Activated CD4-positive, alpha-beta memory T cell treated with anti-CD3 and anti-CD28 coated beads for 36 hours (primary cell): ENCODE measurements at regions of chr21 and their contacts with region 1.

Region 1: DNA sequence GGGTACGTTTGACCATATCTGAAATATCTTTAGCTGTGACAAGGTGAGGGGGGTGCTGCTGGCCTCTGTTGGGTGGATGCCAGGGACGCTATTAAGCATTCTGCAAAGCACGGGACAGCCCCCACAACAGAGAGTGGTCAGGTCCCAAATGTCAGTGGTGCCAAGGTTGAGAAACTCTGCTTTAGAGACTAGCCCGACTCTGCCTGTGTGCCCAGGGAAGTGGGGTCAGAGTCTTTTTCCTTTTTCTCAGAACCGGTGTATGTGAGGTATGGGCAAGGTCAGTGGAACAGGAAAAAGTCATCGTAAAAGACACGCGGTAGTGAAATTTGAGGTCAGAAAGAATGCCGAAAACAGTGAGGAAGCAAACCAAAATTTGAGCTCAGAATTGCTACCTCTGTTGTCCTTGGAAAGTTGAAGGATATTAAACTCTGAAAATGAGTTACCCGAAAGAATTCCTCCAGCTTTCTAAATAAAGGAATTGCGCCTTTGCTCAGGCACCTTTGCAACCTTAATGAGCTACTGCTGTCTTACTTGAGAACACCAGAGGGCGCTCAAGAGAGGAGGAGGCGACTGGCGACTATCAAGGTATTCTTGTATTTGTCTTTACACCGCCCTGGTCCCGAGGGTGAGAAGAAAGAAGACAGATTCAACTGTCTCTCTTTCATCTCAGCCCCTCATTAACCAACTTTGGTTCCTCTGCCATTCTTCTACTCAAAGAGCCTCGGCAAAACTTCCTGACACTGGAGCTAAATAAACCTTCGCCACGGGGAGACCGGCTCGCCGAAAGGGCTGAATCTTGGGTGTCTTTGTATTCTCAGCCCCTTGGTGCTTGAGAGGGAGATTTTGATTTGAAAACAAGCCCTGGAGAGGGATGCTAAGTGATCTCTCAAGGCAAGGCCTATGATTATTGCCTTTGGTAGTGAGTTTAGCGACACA is 85.4 kb upstream of the OLIG2 start:
- DNase-seq: peak; percentile 44
- H3K4me3 Mint-ChIP-seq: no peak overlapping the region
- H3K27ac Mint-ChIP-seq: no peak overlapping the region
- H3K4me1 Mint-ChIP-seq: no peaks in the 10 kb centered on the region
- H3K27me3 Mint-ChIP-seq: peaks cover 3% of the 10 kb centered on the region

Region 2: DNA sequence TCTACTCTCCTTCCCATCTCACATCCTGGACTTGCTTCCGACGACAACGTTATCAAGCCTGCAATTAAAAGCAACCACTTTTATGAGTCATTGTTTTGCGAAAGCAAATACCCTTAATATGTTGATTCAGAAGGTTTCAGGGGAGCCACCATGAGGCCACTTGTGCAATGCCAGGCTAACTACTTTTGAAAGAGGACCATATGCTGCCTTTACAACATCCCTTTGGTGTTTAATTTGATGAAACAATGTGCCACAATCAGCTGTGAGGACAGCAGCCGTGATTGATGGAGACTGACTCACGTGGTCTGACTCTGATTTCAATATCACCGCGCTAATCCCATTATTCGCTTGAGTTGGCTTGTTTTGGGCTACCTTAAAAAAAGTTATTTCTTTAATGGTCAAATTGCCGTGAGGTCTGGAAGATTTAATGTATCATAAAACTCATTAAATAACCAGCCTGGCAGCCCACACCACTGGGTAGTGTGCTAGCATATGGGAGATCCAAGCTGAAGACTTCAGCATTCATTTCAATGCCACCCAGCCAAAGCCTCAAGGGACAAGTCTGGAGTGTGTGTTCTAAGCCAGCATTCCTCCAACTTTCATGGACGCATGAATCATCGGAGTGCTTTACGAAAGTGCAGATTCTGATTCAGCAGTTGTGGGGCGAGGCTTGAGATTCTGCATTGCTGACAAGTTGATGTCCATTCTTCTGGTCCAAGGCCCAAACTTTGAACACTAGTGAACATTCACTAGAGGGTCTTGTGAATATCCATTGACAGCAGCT is 95.5 kb before region 1 on chr21:
- CTCF ChIA-PET with region 1: interaction called, 11 read pairs
- POLR2A ChIA-PET with region 1: no interaction called
- intact Hi-C with region 1: no loop called
- DNase-seq: no peak
- H3K4me3 Mint-ChIP-seq: no peak overlapping the region
- H3K27ac Mint-ChIP-seq: no peak overlapping the region
- H3K4me1 Mint-ChIP-seq: no peaks in the 10 kb centered on the region
- H3K27me3 Mint-ChIP-seq: peaks cover 5% of the 10 kb centered on the region

Region 3: GRCh38 chr21:32916522-32917099 is 23.7 kb before region 1 on chr21:
- CTCF ChIA-PET with region 1: interaction called, 33 read pairs
- POLR2A ChIA-PET with region 1: no interaction called
- intact Hi-C with region 1: no loop called
- DNase-seq: peak; percentile 14
- H3K4me3 Mint-ChIP-seq: no peak overlapping the region
- H3K27ac Mint-ChIP-seq: no peak overlapping the region
- H3K4me1 Mint-ChIP-seq: peaks cover 26% of the 10 kb centered on the region
- H3K27me3 Mint-ChIP-seq: peaks cover under 1% of the 10 kb centered on the region

Region 4: DNA sequence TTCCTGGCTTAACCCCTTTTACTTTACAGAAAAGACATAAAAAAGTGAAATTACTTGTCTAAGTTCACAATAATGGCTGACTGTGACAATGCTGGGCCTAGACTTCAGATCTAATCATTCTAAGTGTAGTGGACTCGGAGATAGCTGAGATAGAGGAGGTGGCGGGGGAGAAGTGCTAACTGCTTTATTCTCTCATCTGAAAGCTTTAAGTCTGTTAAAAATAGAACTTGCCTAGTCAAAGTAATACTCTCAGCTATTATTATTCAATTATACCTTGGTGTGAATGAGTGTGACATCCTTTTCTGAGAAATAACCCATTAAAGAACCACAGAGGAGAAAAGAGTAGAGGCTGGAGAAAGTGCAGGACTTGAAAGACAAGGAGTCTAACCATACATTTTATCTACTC is 10.7 kb before region 1 on chr21:
- CTCF ChIA-PET with region 1: interaction called, 14 read pairs
- POLR2A ChIA-PET with region 1: no interaction called
- intact Hi-C with region 1: no loop called
- DNase-seq: peak; percentile 34
- H3K4me3 Mint-ChIP-seq: peak overlapping the region; percentile 33
- H3K27ac Mint-ChIP-seq: peak overlapping the region; percentile 43
- H3K4me1 Mint-ChIP-seq: peaks cover 40% of the 10 kb centered on the region
- H3K27me3 Mint-ChIP-seq: no peaks in the 10 kb centered on the region

Region 5: DNA sequence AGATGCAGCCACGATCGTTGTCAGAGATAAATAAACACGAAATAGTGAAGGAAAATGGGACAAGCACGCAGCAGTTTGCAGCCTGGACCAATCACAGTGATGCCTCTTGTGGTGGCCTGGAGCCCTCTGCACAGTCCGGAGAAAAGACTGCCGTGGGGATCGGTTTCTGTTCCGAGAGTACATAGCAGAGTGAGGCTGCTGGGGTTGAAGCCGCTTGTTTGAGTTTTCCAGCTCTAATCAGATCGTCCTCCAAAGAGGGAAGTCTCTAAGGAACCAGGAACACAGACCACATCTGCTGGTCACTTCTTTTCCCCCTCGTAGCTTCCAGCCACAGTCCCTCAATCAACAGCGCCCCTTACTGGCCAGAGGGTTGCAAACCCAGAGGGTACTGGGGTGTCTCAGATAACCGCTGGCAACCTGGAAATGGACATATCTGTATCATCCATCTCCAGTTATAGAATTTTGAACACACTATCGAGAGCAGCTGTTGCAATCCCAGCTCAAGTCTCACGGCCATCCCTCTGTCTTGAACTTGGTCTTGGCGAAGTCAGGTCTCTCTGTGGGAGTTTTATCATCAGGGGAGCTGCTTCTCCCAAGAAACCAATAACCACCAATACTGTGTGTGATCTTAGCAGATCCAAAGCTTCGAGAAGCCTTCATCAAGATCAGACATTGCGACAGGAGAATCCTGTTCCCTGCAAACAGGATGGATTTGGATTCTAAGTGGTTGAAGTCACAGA is 187.0 kb after region 1 on chr21:
- CTCF ChIA-PET with region 1: interaction called, 17 read pairs
- POLR2A ChIA-PET with region 1: no interaction called
- intact Hi-C with region 1: loop called (anchors 1 kb)
- DNase-seq: peak; percentile 77
- H3K4me3 Mint-ChIP-seq: peak overlapping the region; percentile 38
- H3K27ac Mint-ChIP-seq: no peak overlapping the region
- H3K4me1 Mint-ChIP-seq: peaks cover 3% of the 10 kb centered on the region
- H3K27me3 Mint-ChIP-seq: peaks cover 14% of the 10 kb centered on the region